Dendritic cell treated with granulocyte-macrophage colony-stimulating factor and Interleukin-4, amounts not matched to agents 40 ng/mL and 50 ng/mL, for 4 days (primary cell): ENCODE measurements at regions of chr7 and their contacts with region 1.

Region 1: DNA sequence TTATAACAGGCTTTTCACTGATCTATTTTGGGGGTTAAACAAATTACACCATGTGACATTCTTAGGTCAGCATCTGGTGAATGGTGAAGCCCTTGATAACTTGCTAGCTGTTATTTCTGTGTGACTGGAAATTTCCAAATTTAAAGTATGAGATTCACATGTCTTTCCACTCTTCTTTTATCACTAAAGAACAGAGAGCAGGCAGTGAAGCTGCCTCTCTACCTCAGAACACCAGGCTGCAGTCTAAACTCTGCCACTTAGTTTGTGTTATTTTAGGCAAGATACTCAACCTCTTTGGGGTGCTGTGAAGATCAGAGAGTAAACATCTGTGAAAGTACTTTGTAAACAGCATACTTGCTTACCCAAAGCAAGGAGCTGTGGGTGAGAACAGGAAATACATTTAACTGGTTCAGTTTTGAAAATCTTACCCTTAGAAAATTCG is 15.5 kb upstream of the SP4 start:
- H3K4me3 Mint-ChIP-seq: no peak overlapping the region
- H3K27ac Mint-ChIP-seq: no peak overlapping the region
- H3K4me1 Mint-ChIP-seq: peaks cover 6% of the 10 kb centered on the region
- H3K27me3 Mint-ChIP-seq: peaks cover 2% of the 10 kb centered on the region

Region 2: DNA sequence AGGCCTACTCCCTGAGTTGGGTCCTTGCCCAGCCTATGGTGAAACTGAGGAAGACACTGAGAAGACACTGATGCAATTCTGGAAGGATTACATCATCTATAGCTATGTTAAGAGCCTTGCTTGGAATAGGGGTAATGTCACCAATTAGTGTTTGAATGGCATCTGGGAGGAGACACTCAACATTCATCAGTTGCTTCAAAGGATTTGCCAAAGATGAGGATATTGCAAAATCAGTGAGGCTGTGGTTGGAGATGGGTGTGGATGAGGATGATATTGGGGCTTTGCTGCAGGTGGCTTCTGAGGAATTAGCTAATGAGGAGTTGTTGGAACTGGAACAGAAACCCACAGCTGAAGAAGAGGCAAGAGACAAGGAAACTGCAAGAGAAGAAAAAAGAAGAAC is 131.2 kb before region 1 on chr7:
- intact Hi-C with region 1: loop called (anchors 10 kb)
- H3K4me3 Mint-ChIP-seq: no peak overlapping the region
- H3K27ac Mint-ChIP-seq: peak overlapping the region; percentile 28
- H3K4me1 Mint-ChIP-seq: peaks cover 17% of the 10 kb centered on the region
- H3K27me3 Mint-ChIP-seq: no peaks in the 10 kb centered on the region

Region 3: GRCh38 chr7:21365866-21366624 is 46.4 kb before region 1 on chr7:
- intact Hi-C with region 1: no loop called
- H3K4me3 Mint-ChIP-seq: no peak overlapping the region
- H3K27ac Mint-ChIP-seq: no peak overlapping the region
- H3K4me1 Mint-ChIP-seq: peaks cover 9% of the 10 kb centered on the region
- H3K27me3 Mint-ChIP-seq: no peaks in the 10 kb centered on the region